Thyroid gland (tissue), 4 donors: ENCODE measurements at regions of chr15 and their contacts with region 1.

Region 1: DNA sequence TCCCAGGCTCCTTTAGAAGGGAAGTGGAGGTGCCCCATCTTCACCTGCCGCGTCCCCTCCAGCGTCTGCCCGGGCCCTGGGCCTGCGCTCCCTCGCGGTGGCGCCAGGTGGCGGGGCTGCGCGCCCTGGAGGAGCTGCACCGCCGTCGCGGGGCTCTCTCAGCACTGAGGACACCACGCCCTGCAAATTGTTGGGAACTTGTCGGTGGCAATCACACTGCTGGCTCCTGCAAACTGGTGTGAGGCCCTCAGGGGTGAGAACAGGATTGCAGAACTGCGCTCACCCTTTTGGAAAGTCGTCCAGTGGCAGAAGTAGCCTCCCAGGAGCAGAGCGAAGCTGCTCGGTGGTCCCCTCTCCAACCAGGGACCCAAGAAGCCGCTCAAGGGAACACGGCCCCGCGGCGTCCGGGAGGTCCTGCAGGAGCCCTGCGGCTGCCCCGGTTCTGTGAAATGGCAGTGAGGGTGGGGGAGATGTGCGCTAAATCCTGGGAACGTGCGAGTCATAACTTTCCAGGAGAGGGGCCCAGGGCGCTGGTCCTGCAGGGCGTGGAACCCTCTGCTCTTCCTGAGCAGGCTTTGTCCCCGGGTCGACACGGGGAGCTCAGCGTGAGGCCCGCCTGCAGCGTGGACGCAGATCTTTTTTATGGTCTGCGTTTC is 995 bp upstream of the LRRK1 start:
- DNase-seq: peak; percentile 84 to 85
- H3K4me3 ChIP-seq: peak overlapping the region in 2 of 3 donors; percentile 27 to 60
- H3K27ac ChIP-seq: no peak overlapping the region
- H3K4me1 ChIP-seq: peaks cover 0 to 12% of the 10 kb centered on the region in 2 donors
- H3K27me3 ChIP-seq: no peaks in the 10 kb centered on the region
- CTCF ChIP-seq: peak; percentile 68 to 97 (median 96)
- POLR2A ChIP-seq: peak in 1 of 2 donors; percentile 22

Region 2: DNA sequence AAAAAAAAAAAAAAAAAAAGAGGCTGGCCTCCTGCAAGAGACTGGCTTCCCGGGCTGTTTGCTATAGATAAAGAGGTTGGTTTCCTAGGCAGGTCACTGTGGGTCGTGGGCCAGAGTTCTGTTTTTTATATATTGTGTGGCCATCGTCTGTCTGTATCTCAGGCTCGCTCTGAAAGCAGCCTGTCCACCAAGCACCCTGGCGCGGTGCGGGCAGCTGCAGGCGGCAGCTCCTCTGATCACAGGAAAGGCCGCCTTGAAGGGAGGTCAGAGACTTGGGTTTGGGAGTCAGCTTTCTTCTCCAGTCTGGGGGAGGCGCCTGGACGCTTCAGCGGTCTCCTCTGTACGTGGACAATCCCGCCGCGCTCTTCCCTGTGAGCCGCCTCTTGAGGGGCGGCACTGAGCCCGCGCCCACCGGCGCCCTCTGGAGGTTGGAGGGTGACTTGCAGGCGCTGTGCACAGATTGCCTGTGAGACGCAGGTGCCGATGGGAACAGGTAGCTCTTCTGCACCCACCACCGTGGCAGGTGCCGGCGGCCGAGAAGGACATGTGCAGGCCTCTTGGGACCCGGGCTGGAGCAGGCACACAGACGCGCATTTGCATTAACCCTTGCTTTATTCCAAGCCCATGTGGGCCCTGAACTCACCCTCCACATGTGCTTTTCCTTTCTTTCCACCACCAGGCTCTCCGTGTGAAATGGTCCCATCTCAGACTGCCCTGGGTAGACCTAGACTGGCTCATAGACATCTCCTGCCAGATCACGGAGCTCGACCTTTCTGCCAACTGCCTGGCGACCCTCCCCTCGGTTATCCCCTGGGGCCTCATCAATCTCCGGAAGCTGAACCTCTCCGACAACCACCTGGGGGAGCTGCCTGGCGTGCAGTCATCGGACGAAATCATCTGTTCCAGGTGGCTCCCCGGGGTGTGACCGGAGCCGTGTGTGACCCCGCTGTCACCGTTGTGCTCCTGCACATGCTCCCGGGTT is 90.3 kb after region 1 on chr15:
- intact Hi-C with region 1: loop called (anchors 2 kb)
- DNase-seq: peak; percentile 87 to 91
- H3K4me3 ChIP-seq: peak overlapping the region in 2 of 3 donors; percentile 5 to 31
- H3K27ac ChIP-seq: no peak overlapping the region
- H3K4me1 ChIP-seq: peaks cover 0 to 14% of the 10 kb centered on the region in 2 donors
- H3K27me3 ChIP-seq: no peaks in the 10 kb centered on the region
- CTCF ChIP-seq: peak; percentile 91 to 100 (median 96)
- POLR2A ChIP-seq: peak in 1 of 2 donors; percentile 30

Region 3: DNA sequence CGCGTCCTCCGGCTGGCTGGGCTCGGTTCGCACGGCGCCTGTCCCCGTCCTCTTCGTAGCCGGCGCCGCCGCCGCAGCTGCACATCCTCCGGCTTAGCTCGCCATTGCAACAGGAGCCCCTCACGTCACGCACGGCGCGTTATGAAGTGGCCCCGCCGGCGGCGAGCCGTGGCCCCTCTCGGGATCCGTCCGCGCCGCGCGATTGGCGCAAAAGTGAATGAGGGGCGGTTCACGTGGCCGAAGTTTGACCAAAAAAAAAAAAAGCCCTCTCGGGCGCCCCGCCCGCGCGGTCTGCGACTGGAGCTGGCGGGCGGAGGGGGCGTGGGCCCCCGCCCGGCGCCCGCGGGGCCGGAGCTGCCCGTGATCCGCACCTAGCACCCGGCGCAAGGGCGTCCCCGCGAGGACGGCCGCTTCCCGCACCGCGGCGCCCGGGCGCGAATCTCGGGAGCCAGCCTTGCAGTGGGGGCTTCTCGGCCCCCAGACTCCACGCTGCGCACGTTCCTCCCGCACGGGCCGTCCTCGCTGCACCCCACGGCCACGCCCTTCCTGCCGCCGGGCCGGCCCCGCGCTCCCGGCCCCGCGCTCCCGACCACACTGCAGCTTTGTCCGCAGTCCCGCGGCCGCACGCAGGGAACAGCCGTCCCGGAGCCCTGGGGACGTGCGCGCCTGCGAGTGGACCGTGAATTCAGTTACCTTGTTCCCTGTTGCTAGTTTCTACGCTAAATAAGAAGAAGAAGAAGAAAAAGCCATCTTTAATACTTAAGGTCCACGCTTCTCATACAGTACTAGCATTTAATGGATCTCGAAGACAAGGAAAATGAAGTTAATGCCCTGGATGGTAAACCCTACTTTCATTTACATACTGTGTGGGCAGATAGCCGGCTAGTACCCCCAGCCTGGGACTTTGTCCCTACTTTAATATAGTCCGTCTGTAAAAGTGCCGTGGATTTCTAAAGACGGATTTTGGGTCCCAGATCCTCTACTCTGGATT is 334.0 kb after region 1 on chr15 and contains the start of gene CHSY1:
- intact Hi-C with region 1: loop called (anchors 10 kb)
- DNase-seq: peak; percentile 88 to 91
- H3K4me3 ChIP-seq: peak within 1 kb of the TSS; percentile 64 to 86 (median 78)
- H3K27ac ChIP-seq: peak within 1 kb of the TSS; percentile 62 to 82 (median 81)
- H3K4me1 ChIP-seq: peaks cover 9 to 21% of the 10 kb centered on the region in 2 donors
- H3K27me3 ChIP-seq: no peaks in the 10 kb centered on the region
- CTCF ChIP-seq: peak in 2 of 6 experiments; percentile 30 to 33
- POLR2A ChIP-seq: peak in 1 of 2 donors; percentile 68
- total RNA-seq, gene CHSY1: 13.8 to 26.6 (median 18.5) TPM

Region 4: DNA sequence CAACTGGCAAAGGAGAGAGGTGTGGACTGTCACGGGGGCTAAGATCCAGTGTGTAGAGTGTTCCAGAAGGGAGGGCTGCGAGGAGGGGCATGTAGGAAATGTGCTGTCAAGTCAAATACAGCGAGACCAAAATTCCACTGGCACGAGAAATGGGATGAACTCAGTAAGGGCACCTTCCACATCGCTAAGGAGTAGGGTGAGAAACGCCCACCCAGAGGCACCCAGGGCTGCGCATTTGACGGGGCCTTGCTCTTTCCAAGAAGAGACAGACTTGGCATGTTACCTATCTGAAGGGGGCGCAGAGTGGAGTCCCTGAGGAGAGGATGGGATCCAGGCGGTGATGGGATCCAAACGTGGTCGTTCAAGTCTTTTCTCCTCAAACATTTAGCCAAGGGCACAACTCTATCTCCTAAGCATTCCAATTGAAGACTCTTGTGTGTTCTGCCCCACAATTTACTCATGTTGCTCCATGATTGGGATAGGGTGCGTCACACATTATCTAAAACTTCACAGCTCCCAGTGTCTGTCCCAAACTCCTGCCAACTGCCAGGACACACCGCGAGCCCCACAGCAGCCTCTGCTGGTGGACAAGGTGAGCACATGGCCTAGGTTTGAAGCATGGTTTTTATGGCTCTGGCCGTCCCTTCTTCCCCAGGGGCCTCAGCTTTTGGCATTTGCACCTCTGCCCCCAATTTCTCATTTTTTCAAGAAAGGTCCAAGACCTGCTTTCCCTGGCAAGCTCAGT is 351.5 kb after region 1 on chr15:
- intact Hi-C with region 1: loop called (anchors 5 kb)
- DNase-seq: no peak
- H3K4me3 ChIP-seq: no peak overlapping the region
- H3K27ac ChIP-seq: no peak overlapping the region
- H3K4me1 ChIP-seq: peaks cover 0 to 8% of the 10 kb centered on the region in 2 donors
- H3K27me3 ChIP-seq: no peaks in the 10 kb centered on the region
- CTCF ChIP-seq: peak in 1 of 6 experiments; percentile 5
- POLR2A ChIP-seq: no peak